Activated B cell treated with CpG ODN at 0.5 μM for 24 hours (primary cell): ENCODE measurements at regions of chr3 and their contacts with region 1.

Region 1: DNA sequence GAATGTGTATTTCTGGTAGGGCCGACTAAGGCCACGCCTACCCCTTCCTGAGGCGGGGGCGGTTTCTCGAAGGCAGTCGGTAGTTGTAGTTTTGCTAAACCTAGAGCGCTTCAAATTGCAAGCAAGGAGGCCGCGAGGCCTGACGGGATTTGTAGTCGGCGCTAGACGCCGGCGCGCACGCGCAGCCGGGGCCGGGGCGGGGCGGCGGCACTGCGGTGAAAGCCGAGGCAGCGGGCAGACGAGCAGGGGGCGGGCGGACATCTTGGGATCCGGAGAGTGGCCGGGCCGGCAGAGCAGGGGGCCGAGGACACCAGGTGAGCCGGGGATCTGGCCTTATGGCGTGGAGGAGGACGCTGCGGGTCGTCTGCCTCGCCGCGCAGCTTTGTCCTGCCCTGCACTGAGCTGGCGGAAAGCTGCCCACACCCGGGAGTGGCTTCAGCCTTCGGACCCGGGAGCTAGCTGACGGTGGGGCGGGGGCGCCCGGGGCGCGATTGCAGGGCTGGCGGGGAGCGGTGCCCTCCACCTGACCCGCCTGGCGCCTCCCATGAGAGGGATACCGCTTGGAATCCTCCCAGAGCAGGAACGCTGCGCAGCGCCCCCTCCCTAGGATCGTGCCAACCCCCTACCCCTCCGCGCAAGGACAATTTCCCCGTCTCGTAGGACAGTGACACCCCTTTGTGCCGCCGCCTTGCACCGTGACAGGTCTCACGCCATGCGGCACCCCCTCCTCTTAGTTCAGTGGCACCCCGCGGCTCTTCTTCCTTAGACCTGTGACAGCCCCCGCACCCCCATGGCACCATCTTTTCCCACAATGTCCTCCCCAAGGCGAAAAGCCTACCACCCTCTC is at the start of gene AP2M1:
- DNase-seq: peak; percentile 99
- ATAC-seq: peak; percentile 97
- H3K4me3 Mint-ChIP-seq: peak within 1 kb of the TSS; percentile 90
- H3K27ac Mint-ChIP-seq: peak within 1 kb of the TSS; percentile 75
- H3K4me1 Mint-ChIP-seq: peaks cover 37% of the 10 kb centered on the region
- H3K27me3 Mint-ChIP-seq: no peaks in the 10 kb centered on the region
- CTCF ChIP-seq: no peak
- total RNA-seq, gene AP2M1: 169 and 177 TPM in 2 replicates

Region 2: DNA sequence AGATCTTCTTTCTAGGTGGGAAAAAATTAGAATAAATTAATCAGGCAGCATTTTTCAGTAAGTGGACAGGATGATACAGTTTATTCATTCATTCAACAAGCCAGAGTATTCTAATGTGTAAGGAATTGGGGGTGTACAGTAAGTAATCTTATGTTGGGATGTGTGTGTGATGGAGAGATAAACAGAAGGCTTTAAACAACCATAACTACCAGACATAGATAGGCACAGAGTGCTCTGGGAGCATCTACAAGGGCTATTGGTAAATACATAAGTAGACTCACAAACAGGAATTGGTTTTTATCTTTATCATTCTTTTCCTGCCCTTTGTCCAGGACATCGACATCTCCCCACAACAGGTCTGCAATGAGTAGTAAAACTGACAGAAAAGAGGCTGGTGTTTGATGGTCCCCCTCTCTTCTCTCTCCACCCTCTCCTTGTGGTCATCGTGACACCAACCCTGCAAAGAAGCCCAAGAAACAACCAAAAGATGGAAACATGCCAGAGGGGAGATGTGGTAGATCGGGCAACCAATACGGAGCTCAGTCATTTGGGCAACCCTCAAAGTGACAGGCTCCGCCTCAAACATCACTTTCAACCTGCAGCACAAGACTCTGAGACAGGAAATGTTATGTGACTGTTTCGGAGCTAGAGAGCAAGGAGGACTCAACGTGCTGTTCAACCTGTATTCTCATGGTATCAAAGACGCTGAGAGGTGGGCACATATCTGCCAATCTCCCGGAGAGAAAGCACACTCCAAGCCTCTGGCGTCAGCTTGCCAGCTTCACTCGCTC is 950.5 kb before region 1 on chr3:
- CTCF ChIA-PET with region 1: no interaction called
- POLR2A ChIA-PET with region 1: interaction called, 13 read pairs
- intact Hi-C with region 1: no loop called
- DNase-seq: no peak
- ATAC-seq: no peak
- H3K4me3 Mint-ChIP-seq: no peak overlapping the region
- H3K27ac Mint-ChIP-seq: no peak overlapping the region
- H3K4me1 Mint-ChIP-seq: peaks cover 2% of the 10 kb centered on the region
- H3K27me3 Mint-ChIP-seq: peaks cover 16% of the 10 kb centered on the region
- CTCF ChIP-seq: no peak

Region 3: DNA sequence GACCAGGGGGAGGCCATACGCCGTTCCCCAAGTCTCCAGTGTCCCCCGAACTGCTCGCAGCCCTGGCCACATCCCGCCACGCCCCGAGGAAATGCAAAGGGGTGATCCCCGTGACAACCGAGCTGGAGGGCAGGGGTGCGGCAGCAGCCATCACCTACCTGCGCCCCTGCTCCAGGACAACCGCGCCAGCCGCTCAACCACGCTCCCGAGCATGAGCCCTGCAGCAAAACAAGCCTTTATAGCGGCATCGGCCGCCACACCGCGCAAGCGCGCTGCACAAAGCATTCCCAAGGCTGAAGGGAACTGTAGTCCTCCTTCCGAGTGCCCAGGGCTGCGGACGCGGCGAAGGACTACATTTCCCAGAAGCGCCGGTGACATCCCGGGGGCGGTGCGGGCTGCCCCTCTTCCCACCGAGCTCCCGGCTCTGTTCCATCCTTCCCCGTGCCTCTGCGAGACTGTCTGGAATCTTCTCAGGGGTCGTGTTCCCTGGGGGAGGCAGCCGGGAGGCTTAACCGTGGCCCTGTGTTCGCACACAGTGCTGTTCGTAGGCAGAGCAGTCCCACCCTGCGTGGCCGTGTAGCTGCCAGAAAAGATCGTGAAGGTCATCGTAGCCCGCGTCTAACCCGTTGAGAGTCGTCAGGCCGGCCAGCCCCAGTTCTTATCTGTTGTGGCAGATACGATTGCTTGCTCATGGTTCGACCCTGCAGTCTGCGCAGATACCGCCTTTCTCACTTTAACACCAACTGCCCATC is 157.0 kb before region 1 on chr3 and contains the start of gene ABCC5:
- CTCF ChIA-PET with region 1: no interaction called
- POLR2A ChIA-PET with region 1: no interaction called
- intact Hi-C with region 1: loop called (anchors 1 kb)
- DNase-seq: peak; percentile 70
- ATAC-seq: peak; percentile 96
- H3K4me3 Mint-ChIP-seq: peak within 1 kb of the TSS; percentile 100
- H3K27ac Mint-ChIP-seq: peak within 1 kb of the TSS; percentile 84
- H3K4me1 Mint-ChIP-seq: peaks cover 13% of the 10 kb centered on the region
- H3K27me3 Mint-ChIP-seq: peaks cover 12% of the 10 kb centered on the region
- CTCF ChIP-seq: peak; percentile 7
- total RNA-seq, gene ABCC5: 10.6 and 11.1 TPM in 2 replicates

Region 4: DNA sequence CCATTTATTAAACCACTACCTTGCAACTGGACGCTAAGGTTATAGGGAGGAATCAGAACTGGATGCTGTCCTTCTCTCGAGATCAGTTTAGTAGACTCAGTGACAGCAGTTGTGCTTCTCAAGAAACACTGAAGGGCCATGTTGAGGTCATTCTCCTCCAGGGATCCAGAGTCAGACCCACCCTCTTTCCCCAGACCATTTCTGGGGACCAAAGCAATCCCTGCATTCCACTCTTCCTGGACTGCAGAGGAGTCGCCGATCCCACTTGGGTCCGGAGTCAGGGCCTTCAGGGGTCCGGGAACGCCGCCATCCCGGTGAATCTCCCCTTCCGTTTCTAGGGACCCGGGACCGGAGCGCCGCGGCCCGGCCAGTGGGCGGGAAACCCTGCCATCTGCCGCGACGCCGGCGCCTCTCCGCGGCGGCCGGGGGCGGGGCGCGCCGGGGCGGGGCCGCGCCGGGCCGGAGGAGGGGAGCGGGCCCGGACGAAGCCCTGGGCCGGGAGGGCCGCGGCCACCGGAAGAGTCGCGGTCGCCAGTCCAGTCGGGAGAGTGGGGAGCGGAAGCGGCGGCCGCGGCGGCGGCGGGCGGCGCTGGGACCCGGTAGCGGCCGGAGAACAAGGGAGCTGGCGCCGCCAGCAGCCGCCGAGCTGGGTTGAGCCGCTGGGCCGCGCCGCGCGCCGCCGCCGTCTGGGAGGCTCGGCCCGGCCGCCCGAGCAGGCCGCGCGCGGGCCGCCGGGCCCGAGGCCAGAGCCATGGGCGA is 19.8 kb before region 1 on chr3 and contains the start of gene DVL3:
- CTCF ChIA-PET with region 1: no interaction called
- POLR2A ChIA-PET with region 1: no interaction called
- intact Hi-C with region 1: loop called (anchors 1 kb)
- DNase-seq: peak; percentile 70
- ATAC-seq: peak; percentile 80
- H3K4me3 Mint-ChIP-seq: peak within 1 kb of the TSS; percentile 91
- H3K27ac Mint-ChIP-seq: peak within 1 kb of the TSS; percentile 77
- H3K4me1 Mint-ChIP-seq: peaks cover 25% of the 10 kb centered on the region
- H3K27me3 Mint-ChIP-seq: no peaks in the 10 kb centered on the region
- CTCF ChIP-seq: no peak
- total RNA-seq, gene DVL3: 52.1 and 54.2 TPM in 2 replicates

Region 5: GRCh38 chr3:184185461-184186308 is 10.8 kb after region 1 on chr3 and contains the start of gene ABCF3:
- CTCF ChIA-PET with region 1: no interaction called
- POLR2A ChIA-PET with region 1: interaction called, 21 read pairs
- intact Hi-C with region 1: loop called (anchors 1 kb)
- DNase-seq: peak; percentile 99
- ATAC-seq: peak; percentile 95
- H3K4me3 Mint-ChIP-seq: peak within 1 kb of the TSS; percentile 99
- H3K27ac Mint-ChIP-seq: peak within 1 kb of the TSS; percentile 93
- H3K4me1 Mint-ChIP-seq: peaks cover 40% of the 10 kb centered on the region
- H3K27me3 Mint-ChIP-seq: no peaks in the 10 kb centered on the region
- CTCF ChIP-seq: no peak
- total RNA-seq, gene ABCF3: 78.0 and 86.7 TPM in 2 replicates

Region 6: DNA sequence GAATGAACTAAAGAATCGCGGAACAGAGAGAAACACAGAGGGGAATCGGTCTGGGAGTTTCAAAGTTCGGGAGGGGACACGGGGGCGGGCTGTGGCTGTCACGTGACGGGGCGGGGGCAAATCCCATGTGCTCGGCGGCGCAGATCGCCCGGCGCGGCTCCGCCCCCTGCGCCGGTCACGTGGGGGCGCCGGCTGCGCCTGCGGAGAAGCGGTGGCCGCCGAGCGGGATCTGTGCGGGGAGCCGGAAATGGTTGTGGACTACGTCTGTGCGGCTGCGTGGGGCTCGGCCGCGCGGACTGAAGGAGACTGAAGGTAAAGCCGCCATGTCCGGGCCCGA is 139.5 kb after region 1 on chr3 and contains the start of gene EIF4G1:
- CTCF ChIA-PET with region 1: no interaction called
- POLR2A ChIA-PET with region 1: interaction called, 4 read pairs
- intact Hi-C with region 1: loop called (anchors 1 kb)
- DNase-seq: peak; percentile 92
- ATAC-seq: peak; percentile 86
- H3K4me3 Mint-ChIP-seq: peak within 1 kb of the TSS; percentile 86
- H3K27ac Mint-ChIP-seq: peak within 1 kb of the TSS; percentile 88
- H3K4me1 Mint-ChIP-seq: peaks cover 28% of the 10 kb centered on the region
- H3K27me3 Mint-ChIP-seq: no peaks in the 10 kb centered on the region
- CTCF ChIP-seq: no peak
- total RNA-seq, gene EIF4G1: 292 and 319 TPM in 2 replicates